ENCODE measurements at regions of chr15 and their contacts with region 1.

Region 1: GRCh38 chr15:64430000-64430735 is 30.2 kb upstream of the ZNF609 start:
- DNase-seq: peak; percentile 45

Region 2: DNA sequence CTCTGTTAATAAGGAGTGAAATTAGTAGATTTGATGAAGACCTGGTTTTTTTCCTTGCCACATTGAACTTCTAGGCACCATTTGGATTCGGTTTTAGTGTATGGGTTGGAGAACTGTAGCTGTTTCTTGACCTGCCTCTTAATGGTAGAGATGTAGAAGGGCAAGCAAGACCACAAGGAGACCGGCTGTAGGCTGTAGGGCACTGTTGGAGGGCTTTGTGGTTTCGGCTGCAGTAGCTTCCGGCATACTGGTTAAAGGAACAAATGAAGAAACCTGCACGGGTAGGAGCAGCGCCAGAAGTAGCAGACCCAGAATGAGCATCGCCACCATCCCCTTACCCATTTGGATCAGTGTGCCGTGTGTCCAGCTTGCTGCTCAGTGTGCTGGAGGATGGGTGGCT is 56.8 kb before region 1 on chr15:
- in situ Hi-C with region 1: no loop called
- DNase-seq: no peak

Region 3: GRCh38 chr15:64667736-64668161 is 237.6 kb after region 1 on chr15:
- in situ Hi-C with region 1: loop called (anchors 10 kb)
- DNase-seq: no peak